CD4-positive, alpha-beta memory T cell (primary cell): ENCODE measurements at regions of chr9 and their contacts with region 1.

Region 1: GRCh38 chr9:133335878-133336811 is at the start of gene SURF6:
- DNase-seq: peak; percentile 93 to 94 (median 94)
- H3K4me3 ChIP-seq: peak within 1 kb of the TSS; percentile 50 to 69
- H3K4me3 Mint-ChIP-seq: peak within 1 kb of the TSS; percentile 92 to 97 (median 96)
- H3K27ac ChIP-seq: peak within 1 kb of the TSS; percentile 64
- H3K27ac Mint-ChIP-seq: peak within 1 kb of the TSS; percentile 86 to 96 (median 93)
- H3K4me1 ChIP-seq: peaks cover 41% of the 10 kb centered on the region
- H3K4me1 Mint-ChIP-seq: peaks cover 16 to 64% (median 28%) of the 10 kb centered on the region in 4 donors
- H3K27me3 ChIP-seq: no peaks in the 10 kb centered on the region
- H3K27me3 Mint-ChIP-seq: no peaks in the 10 kb centered on the region
- total RNA-seq, gene SURF6: 28.6 to 28.9 TPM

Region 2: GRCh38 chr9:133356391-133357091 is 20.4 kb after region 1 on chr9 and contains the starts of genes SURF1 and SURF2:
- CTCF ChIA-PET with region 1: interaction called, 3 read pairs
- POLR2A ChIA-PET with region 1: interaction called, 12 read pairs
- intact Hi-C with region 1: loop called (anchors 2 kb)
- DNase-seq: peak; percentile 85 to 90 (median 88)
- H3K4me3 ChIP-seq: peak within 1 kb of the TSS; percentile 61 to 73
- H3K4me3 Mint-ChIP-seq: peak within 1 kb of the TSS; percentile 85 to 92 (median 88)
- H3K27ac ChIP-seq: peak within 1 kb of the TSS; percentile 76
- H3K27ac Mint-ChIP-seq: peak within 1 kb of the TSS; percentile 89 to 93 (median 92)
- H3K4me1 ChIP-seq: peaks cover 33% of the 10 kb centered on the region
- H3K4me1 Mint-ChIP-seq: peaks cover 15 to 44% (median 27%) of the 10 kb centered on the region in 4 donors
- H3K27me3 ChIP-seq: no peaks in the 10 kb centered on the region
- H3K27me3 Mint-ChIP-seq: no peaks in the 10 kb centered on the region
- total RNA-seq, gene SURF1: 54.3 to 61.1 TPM
- total RNA-seq, gene SURF2: 19.5 to 19.8 TPM